Activated CD4-positive, alpha-beta memory T cell treated with anti-CD3 and anti-CD28 coated beads for 36 hours (primary cell): ENCODE measurements at regions of chr22 and their contacts with region 1.

Region 1: GRCh38 chr22:42444077-42444904 is 12.1 kb upstream of the NFAM1 start:
- DNase-seq: peak; percentile 90
- H3K4me3 Mint-ChIP-seq: peak overlapping the region; percentile 68
- H3K27ac Mint-ChIP-seq: peak overlapping the region; percentile 86
- H3K4me1 Mint-ChIP-seq: peaks cover 32% of the 10 kb centered on the region
- H3K27me3 Mint-ChIP-seq: no peaks in the 10 kb centered on the region

Region 2: GRCh38 chr22:41946629-41947423 is 497.5 kb before region 1 on chr22 and contains the start of gene CENPM:
- CTCF ChIA-PET with region 1: interaction called, 11 read pairs
- POLR2A ChIA-PET with region 1: interaction called, 4 read pairs
- intact Hi-C with region 1: loop called (anchors 5 kb)
- DNase-seq: peak; percentile 96
- H3K4me3 Mint-ChIP-seq: peak within 1 kb of the TSS; percentile 98
- H3K27ac Mint-ChIP-seq: peak within 1 kb of the TSS; percentile 87
- H3K4me1 Mint-ChIP-seq: peaks cover 52% of the 10 kb centered on the region
- H3K27me3 Mint-ChIP-seq: no peaks in the 10 kb centered on the region
- total RNA-seq, gene CENPM: 99.9 to 106 TPM

Region 3: DNA sequence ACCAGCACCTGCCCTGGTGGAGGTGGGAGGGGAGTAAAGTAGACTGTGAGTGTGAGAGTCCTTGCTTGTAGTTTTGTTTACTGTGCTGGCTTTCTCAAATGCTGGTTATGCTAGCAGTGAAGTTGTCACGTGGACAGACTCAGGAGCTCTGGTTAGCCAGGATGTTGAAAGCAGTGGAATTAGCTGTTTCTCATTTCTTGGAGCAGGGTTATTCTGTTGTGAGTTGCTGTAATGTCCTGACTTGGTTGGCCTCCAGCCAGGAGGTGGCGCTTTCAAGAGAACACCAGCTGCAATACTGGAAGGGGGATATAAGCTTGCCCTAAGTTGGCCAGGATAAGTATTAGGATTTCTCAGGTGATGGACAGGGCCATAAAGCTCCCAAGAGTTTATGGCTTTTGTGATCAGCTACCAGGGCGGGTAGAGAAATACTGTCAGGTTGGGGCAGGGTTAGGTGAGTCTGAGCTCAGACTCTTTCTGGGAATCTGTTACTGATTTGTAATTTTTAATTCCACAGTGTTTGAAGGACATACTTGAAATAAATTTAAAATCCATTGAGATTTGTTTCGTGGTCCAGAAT is 327.4 kb before region 1 on chr22:
- CTCF ChIA-PET with region 1: interaction called, 12 read pairs
- POLR2A ChIA-PET with region 1: no interaction called
- intact Hi-C with region 1: no loop called
- DNase-seq: no peak
- H3K4me3 Mint-ChIP-seq: no peak overlapping the region
- H3K27ac Mint-ChIP-seq: no peak overlapping the region
- H3K4me1 Mint-ChIP-seq: peaks cover 26% of the 10 kb centered on the region
- H3K27me3 Mint-ChIP-seq: no peaks in the 10 kb centered on the region

Region 4: GRCh38 chr22:42151924-42152635 is 292.2 kb before region 1 on chr22:
- CTCF ChIA-PET with region 1: no interaction called
- POLR2A ChIA-PET with region 1: no interaction called
- intact Hi-C with region 1: no loop called
- DNase-seq: no peak
- H3K4me3 Mint-ChIP-seq: no peak overlapping the region
- H3K27ac Mint-ChIP-seq: no peak overlapping the region
- H3K4me1 Mint-ChIP-seq: no peaks in the 10 kb centered on the region
- H3K27me3 Mint-ChIP-seq: no peaks in the 10 kb centered on the region

Region 5: DNA sequence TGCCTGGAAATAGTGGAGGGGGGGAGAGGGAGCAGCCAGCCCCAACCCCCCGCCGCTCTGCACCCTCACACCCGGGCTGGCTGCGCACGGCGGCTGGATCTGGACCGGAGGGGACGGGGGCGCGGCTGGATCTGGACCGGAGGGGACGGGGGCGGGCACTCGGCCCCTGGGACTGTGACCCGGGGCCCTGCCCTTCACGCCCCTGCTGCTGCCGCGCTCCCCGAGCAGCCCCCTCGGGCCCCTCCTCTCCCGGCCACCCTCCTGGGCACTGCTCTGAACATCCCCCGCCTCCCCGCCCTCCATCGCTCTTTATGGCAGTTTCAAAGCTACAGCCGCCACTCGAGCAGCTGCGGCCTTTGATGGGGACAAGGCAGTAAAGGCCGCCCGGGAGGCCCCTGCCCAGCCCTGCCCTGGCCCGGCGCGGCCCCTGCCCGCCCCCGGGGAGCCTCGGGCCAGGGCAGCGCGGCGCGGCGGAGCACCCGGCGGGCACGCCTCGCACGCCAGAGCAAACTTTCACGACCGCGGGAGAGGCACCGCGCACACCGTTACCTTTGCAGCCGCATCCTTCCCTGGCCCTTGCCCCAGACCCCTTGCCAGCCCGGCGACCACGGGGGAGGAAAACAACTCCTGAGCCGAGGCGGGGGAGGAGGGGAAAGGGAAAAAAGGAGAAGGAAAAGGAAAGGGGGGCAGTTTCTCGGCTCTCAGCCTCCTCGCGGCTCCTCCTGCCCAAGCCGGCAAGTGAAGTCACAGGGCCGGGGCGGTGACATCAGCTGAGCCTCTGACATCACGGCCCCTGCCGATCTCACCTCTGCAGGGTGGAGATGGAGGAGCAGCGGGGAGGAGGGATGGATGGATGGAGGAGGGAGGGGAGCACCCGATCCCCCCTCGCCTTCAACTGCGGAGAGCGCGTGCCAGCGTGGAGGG is 160.8 kb before region 1 on chr22:
- CTCF ChIA-PET with region 1: interaction called, 3 read pairs
- POLR2A ChIA-PET with region 1: no interaction called
- intact Hi-C with region 1: loop called (anchors 10 kb)
- DNase-seq: peak; percentile 72
- H3K4me3 Mint-ChIP-seq: peak overlapping the region; percentile 60
- H3K27ac Mint-ChIP-seq: no peak overlapping the region
- H3K4me1 Mint-ChIP-seq: peaks cover 27% of the 10 kb centered on the region
- H3K27me3 Mint-ChIP-seq: peaks cover 3% of the 10 kb centered on the region

Region 6: DNA sequence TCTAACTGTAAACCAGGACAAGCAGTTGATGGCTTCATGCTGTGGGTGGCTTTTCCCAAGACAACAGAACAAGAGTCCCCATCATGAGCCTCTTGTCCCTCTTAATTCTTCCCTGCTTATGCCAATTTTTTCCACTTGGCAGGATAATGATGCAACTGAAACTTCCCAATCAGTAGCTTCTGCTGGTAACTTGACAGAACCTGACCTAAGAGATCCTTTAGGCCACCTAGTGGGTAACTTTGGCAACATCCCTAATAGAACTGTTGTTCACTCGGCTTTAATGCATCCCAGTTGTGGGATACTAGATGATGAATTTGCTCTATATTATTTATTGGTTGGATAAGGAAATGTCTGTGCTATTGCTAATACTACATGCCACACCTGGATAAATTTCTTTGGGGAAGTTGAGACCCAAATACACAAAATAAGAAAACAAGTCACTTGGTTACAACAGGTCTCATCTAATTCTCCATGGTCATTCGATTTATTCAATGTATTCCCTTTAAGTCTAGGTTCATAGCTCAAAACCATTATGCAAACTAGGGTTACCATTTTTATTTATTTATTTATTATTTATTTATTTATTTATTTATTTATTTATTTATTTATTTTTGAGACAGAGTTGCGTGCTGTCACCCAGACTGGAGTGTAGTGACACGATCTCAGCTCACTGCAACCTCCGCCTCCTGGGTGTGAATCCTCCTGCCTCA is 29.3 kb after region 1 on chr22:
- CTCF ChIA-PET with region 1: interaction called, 11 read pairs
- POLR2A ChIA-PET with region 1: no interaction called
- intact Hi-C with region 1: no loop called
- DNase-seq: no peak
- H3K4me3 Mint-ChIP-seq: no peak overlapping the region
- H3K27ac Mint-ChIP-seq: no peak overlapping the region
- H3K4me1 Mint-ChIP-seq: peaks cover 5% of the 10 kb centered on the region
- H3K27me3 Mint-ChIP-seq: no peaks in the 10 kb centered on the region